CD4-positive, alpha-beta memory T cell (primary cell): ENCODE measurements at regions of chr16 and their contacts with region 1.

Region 1: DNA sequence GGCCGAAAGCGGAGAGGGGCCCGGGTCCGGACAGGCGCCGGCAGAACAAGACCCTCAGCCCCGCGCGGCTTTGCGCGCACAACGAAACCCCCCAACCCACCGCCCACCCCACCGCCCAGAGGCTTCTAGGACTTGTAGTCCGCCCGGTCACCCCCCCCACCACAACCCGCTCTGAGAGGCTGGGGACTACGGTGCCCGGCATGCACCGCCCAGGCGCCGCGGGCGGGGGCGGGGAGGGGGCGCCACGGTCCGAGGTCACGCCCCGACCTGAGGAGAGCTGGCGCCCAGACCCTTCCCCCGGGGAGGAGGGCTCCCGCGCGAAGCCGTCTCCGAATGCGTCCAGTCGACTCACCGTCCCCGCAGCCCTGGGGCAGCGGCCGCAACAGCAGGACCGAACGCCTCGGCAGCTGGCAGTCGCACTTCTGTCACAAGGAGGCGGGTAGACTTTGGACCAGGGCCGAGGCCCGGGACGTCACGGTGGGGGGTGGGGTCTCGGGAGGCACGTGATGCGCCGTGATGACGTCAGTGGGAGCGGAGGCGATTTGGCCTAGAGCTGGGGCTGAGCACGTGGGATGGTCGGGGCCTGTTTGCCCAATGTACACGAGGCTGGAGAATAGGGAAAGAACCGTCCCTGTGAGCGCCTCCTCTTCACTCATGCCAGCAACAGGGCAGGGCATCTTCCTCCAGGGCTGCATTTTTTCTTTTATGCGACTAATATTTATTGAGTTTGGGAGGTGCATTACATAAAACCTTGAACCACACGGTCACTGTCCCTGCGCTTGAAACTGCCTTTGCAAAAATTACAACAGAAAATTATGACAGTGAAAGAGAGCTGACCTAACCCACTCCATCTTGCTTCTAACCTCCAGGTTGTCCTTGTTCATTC is at the start of gene CDIP1:
- DNase-seq: peak; percentile 89 to 94 (median 90)
- H3K4me3 ChIP-seq: peak within 1 kb of the TSS; percentile 69 to 92
- H3K4me3 Mint-ChIP-seq: peak within 1 kb of the TSS; percentile 82 to 89 (median 84)
- H3K27ac ChIP-seq: peak within 1 kb of the TSS; percentile 77
- H3K27ac Mint-ChIP-seq: peak within 1 kb of the TSS; percentile 89 to 97 (median 94)
- H3K4me1 ChIP-seq: peaks cover 30% of the 10 kb centered on the region
- H3K4me1 Mint-ChIP-seq: peaks cover 18 to 35% (median 27%) of the 10 kb centered on the region in 4 donors
- H3K27me3 ChIP-seq: no peaks in the 10 kb centered on the region
- H3K27me3 Mint-ChIP-seq: no peaks in the 10 kb centered on the region
- total RNA-seq, gene CDIP1: 19.0 to 21.1 TPM

Region 2: DNA sequence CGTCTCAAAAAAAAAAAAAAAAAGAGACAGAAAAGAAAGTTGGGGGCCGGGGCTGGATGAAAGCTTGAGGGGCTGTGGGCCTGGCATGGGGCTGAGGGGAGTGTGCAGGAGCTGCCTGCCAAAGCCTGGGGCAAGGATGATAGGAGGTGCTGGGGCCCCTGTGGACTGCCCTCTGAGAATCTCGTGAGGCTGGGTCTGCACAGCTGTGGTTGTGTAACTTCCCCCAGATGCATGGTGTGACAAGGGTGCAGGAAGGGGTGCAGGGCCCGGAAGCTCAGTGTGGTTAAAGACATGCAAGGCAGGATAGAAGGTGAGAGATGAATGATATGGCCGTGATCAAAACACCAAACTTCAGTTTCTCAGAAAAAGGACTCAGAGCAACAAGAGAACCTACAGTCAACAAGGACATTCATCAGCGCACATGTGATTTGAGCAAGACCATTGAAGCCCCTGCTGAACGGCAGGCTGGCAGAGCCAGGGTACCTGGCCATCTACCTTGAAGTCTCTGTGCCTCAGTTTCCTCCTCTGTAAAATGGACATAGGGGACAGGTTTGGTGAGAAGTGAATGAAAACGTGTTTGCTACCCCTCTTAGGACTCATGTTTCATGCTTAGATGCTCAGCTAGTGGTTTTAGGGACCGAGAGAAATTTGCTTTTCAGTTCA is 1463.6 kb before region 1 on chr16:
- CTCF ChIA-PET with region 1: no interaction called
- POLR2A ChIA-PET with region 1: no interaction called
- intact Hi-C with region 1: no loop called
- DNase-seq: peak; percentile 90 to 96 (median 91)
- H3K4me3 ChIP-seq: peak overlapping the region; percentile 4 to 29
- H3K4me3 Mint-ChIP-seq: peak overlapping the region; percentile 74 to 87 (median 83)
- H3K27ac ChIP-seq: peak overlapping the region; percentile 77
- H3K27ac Mint-ChIP-seq: peak overlapping the region; percentile 91 to 99 (median 97)
- H3K4me1 ChIP-seq: peaks cover 98% of the 10 kb centered on the region
- H3K4me1 Mint-ChIP-seq: peaks cover 69 to 98% (median 85%) of the 10 kb centered on the region in 4 donors
- H3K27me3 ChIP-seq: no peaks in the 10 kb centered on the region
- H3K27me3 Mint-ChIP-seq: no peaks in the 10 kb centered on the region

Region 3: DNA sequence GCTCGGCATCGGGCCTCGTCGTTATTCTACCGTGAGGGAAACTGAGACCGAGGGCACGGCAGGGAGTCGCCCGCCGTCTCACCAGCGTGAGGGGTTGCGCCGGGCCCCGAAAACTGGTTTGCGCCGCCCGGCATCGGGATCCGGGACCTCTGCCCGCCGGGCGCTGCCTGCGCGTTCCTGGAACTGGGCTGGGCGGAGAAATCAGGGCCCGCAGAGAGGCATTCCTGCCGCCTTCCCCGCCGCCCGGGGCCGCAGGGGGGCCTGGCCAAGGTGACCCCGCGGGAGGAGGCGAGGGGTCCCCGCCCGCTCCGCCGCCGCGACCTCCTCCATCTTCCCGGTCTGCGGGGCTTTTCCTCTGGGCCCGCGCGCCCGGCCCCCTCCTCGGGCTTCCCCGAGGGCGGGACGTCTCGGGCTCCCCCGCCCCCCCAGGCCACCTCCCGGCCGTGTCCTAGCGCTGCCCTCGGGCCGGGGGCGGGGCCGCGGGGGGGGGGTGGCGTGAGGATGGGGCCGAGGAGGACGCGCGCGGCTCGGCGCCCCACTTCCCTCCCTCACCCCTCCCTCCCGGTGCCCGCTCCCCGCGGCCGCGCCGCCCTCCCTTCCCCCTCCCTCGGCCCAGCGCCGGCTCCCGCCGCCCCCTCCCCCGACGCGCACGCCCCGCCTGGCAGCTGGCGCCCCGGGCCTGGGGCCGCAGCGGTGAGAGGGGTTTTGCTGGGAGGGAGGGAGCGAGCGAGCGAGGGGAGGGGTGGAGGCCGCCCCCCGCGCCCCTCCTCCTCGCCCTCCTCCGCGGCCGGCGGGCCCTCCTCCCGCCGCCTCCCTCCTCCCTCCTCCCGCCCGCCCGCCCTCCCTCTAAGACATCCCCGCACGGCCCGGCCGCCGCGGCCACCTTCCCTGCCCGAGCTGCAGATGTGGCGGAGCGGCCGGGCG is 223.1 kb before region 1 on chr16 and contains the start of gene GLIS2:
- CTCF ChIA-PET with region 1: no interaction called
- POLR2A ChIA-PET with region 1: no interaction called
- intact Hi-C with region 1: no loop called
- DNase-seq: peak in 2 of 5 donors; percentile 16 to 47
- H3K4me3 ChIP-seq: peak within 1 kb of the TSS; percentile 29 to 36
- H3K4me3 Mint-ChIP-seq: peak within 1 kb of the TSS; percentile 87 to 99 (median 93)
- H3K27ac ChIP-seq: no peak within 1 kb of the TSS
- H3K27ac Mint-ChIP-seq: peak within 1 kb of the TSS in 5 of 7 donors; percentile 50 to 95 (median 82)
- H3K4me1 ChIP-seq: peaks cover 23% of the 10 kb centered on the region
- H3K4me1 Mint-ChIP-seq: peaks cover 9 to 22% (median 16%) of the 10 kb centered on the region in 4 donors
- H3K27me3 ChIP-seq: no peaks in the 10 kb centered on the region
- H3K27me3 Mint-ChIP-seq: peaks cover 7 to 11% of the 10 kb centered on the region in 2 donors
- total RNA-seq, gene GLIS2: 0.08 TPM in 1 of 2 experiments, not detected in the other

Region 4: GRCh38 chr16:4425378-4426020 is 113.1 kb before region 1 on chr16 and contains the start of gene DNAJA3:
- CTCF ChIA-PET with region 1: no interaction called
- POLR2A ChIA-PET with region 1: interaction called, 4 read pairs
- intact Hi-C with region 1: loop called (anchors 2 kb)
- DNase-seq: peak; percentile 93 to 96 (median 95)
- H3K4me3 ChIP-seq: peak within 1 kb of the TSS; percentile 98 to 99
- H3K4me3 Mint-ChIP-seq: peak within 1 kb of the TSS; percentile 92 to 98 (median 98)
- H3K27ac ChIP-seq: peak within 1 kb of the TSS; percentile 98
- H3K27ac Mint-ChIP-seq: peak within 1 kb of the TSS; percentile 98 to 100 (median 100)
- H3K4me1 ChIP-seq: peaks cover 28% of the 10 kb centered on the region
- H3K4me1 Mint-ChIP-seq: peaks cover 16 to 36% (median 24%) of the 10 kb centered on the region in 4 donors
- H3K27me3 ChIP-seq: no peaks in the 10 kb centered on the region
- H3K27me3 Mint-ChIP-seq: no peaks in the 10 kb centered on the region
- total RNA-seq, gene DNAJA3: 67.5 to 71.1 TPM

Region 5: GRCh38 chr16:4487955-4488498 is 50.6 kb before region 1 on chr16:
- CTCF ChIA-PET with region 1: no interaction called
- POLR2A ChIA-PET with region 1: interaction called, 11 read pairs
- intact Hi-C with region 1: no loop called
- DNase-seq: peak in 3 of 5 donors; percentile 40 to 54 (median 42)
- H3K4me3 ChIP-seq: peak overlapping the region in 1 of 2 donors; percentile 33
- H3K4me3 Mint-ChIP-seq: peak overlapping the region; percentile 56 to 91 (median 81)
- H3K27ac ChIP-seq: peak overlapping the region; percentile 50
- H3K27ac Mint-ChIP-seq: peak overlapping the region; percentile 81 to 98 (median 97)
- H3K4me1 ChIP-seq: peaks cover 84% of the 10 kb centered on the region
- H3K4me1 Mint-ChIP-seq: peaks cover 36 to 70% (median 57%) of the 10 kb centered on the region in 4 donors
- H3K27me3 ChIP-seq: no peaks in the 10 kb centered on the region
- H3K27me3 Mint-ChIP-seq: no peaks in the 10 kb centered on the region

Region 6: GRCh38 chr16:4561596-4561995 is 23.0 kb after region 1 on chr16:
- CTCF ChIA-PET with region 1: no interaction called
- POLR2A ChIA-PET with region 1: no interaction called
- intact Hi-C with region 1: no loop called
- DNase-seq: no peak
- H3K4me3 ChIP-seq: no peak overlapping the region
- H3K4me3 Mint-ChIP-seq: no peak overlapping the region
- H3K27ac ChIP-seq: no peak overlapping the region
- H3K27ac Mint-ChIP-seq: no peak overlapping the region
- H3K4me1 ChIP-seq: no peaks in the 10 kb centered on the region
- H3K4me1 Mint-ChIP-seq: peaks cover 0 to 4% (median 2%) of the 10 kb centered on the region in 4 donors
- H3K27me3 ChIP-seq: no peaks in the 10 kb centered on the region
- H3K27me3 Mint-ChIP-seq: no peaks in the 10 kb centered on the region

Region 7: GRCh38 chr16:4591706-4592470 is 53.3 kb after region 1 on chr16:
- CTCF ChIA-PET with region 1: no interaction called
- POLR2A ChIA-PET with region 1: no interaction called
- intact Hi-C with region 1: no loop called
- DNase-seq: no peak
- H3K4me3 ChIP-seq: no peak overlapping the region
- H3K4me3 Mint-ChIP-seq: no peak overlapping the region
- H3K27ac ChIP-seq: no peak overlapping the region
- H3K27ac Mint-ChIP-seq: no peak overlapping the region
- H3K4me1 ChIP-seq: no peaks in the 10 kb centered on the region
- H3K4me1 Mint-ChIP-seq: no peaks in the 10 kb centered on the region
- H3K27me3 ChIP-seq: no peaks in the 10 kb centered on the region
- H3K27me3 Mint-ChIP-seq: peaks cover 2 to 6% of the 10 kb centered on the region in 2 donors